ENCODE measurements at regions of chr7 and their contacts with region 1.

Region 1: GRCh38 chr7:27689591-27690164 is 27.0 kb upstream of the HIBADH start:
- DNase-seq: peak in 2 of 4 experiments; percentile 30
- ATAC-seq: peak; percentile 82
- H3K4me3 ChIP-seq: no peak overlapping the region
- H3K27ac ChIP-seq: no peak overlapping the region
- H3K4me1 ChIP-seq: no peaks in the 10 kb centered on the region; a peak in 1 of 5 replicates
- H3K27me3 ChIP-seq: no peaks in the 10 kb centered on the region
- CTCF ChIP-seq: peak; percentile 40 to 61 (median 44); a peak in 5 of 6 replicates
- EP300 ChIP-seq: no peak
- POLR2A ChIP-seq: no peak
- RAD21 ChIP-seq: peak; percentile 57 to 80

Region 2: DNA sequence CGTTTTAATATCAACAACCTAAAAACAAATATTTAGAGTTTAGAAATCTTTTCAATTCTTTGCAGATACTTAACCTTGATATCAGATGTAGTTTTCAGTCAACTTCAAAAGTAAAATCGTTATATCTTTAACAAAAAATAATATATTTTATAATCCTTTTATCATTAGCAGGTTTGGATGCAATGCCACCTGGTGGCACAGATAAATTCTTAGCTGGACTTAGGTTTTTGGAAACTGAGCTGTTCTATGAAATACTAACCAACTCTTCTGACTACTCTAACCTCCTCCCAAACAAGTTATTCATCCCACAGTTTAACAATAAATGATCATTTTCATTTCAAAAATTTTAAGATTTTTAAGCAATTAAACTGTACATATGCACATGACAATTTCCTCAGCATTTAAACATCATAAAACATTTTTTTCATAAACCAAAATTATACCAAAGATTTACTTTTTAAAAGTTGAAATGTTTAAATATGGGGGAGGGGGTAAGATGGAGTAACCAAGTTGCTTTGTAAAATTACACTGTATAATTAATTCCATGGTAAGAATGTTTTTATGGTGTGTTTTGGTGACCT is 83.9 kb before region 1 on chr7:
- CTCF ChIA-PET with region 1: no interaction called
- POLR2A ChIA-PET with region 1: no interaction called
- in situ Hi-C with region 1: no loop called
- intact Hi-C with region 1: no loop called
- DNase-seq: no peak
- ATAC-seq: no peak
- H3K4me3 ChIP-seq: no peak overlapping the region
- H3K27ac ChIP-seq: no peak overlapping the region
- H3K4me1 ChIP-seq: peaks cover 0 to 8% of the 10 kb centered on the region in 2 experiments; a peak in 3 of 5 replicates
- H3K27me3 ChIP-seq: no peaks in the 10 kb centered on the region
- CTCF ChIP-seq: peak in 2 of 3 experiments; percentile 16 to 45; a peak in 3 of 6 replicates
- EP300 ChIP-seq: no peak
- POLR2A ChIP-seq: no peak
- RAD21 ChIP-seq: no peak

Region 3: GRCh38 chr7:27739909-27740448 is 50.3 kb after region 1 on chr7 and contains the start of gene TAX1BP1:
- CTCF ChIA-PET with region 1: no interaction called
- POLR2A ChIA-PET with region 1: no interaction called
- in situ Hi-C with region 1: no loop called
- intact Hi-C with region 1: loop called (anchors 5 kb)
- DNase-seq: peak; percentile 95 to 97 (median 95)
- ATAC-seq: peak; percentile 89
- H3K4me3 ChIP-seq: peak within 1 kb of the TSS; percentile 91
- H3K27ac ChIP-seq: peak within 1 kb of the TSS; percentile 93
- H3K4me1 ChIP-seq: peaks cover 6 to 11% of the 10 kb centered on the region in 2 experiments
- H3K27me3 ChIP-seq: no peaks in the 10 kb centered on the region
- CTCF ChIP-seq: no peak
- EP300 ChIP-seq: no peak
- POLR2A ChIP-seq: peak; percentile 91
- RAD21 ChIP-seq: no peak
- polyA plus RNA-seq, gene TAX1BP1: 109 TPM

Region 4: GRCh38 chr7:27774717-27775328 is 85.1 kb after region 1 on chr7:
- CTCF ChIA-PET with region 1: no interaction called
- POLR2A ChIA-PET with region 1: interaction called, 4 read pairs
- in situ Hi-C with region 1: no loop called
- intact Hi-C with region 1: loop called (anchors 1 kb)
- DNase-seq: peak in 3 of 4 experiments; percentile 15 to 54 (median 18)
- ATAC-seq: peak; percentile 69
- H3K4me3 ChIP-seq: no peak overlapping the region
- H3K27ac ChIP-seq: no peak overlapping the region
- H3K4me1 ChIP-seq: peaks cover 0 to 5% of the 10 kb centered on the region in 2 experiments; a peak in 2 of 5 replicates
- H3K27me3 ChIP-seq: no peaks in the 10 kb centered on the region
- CTCF ChIP-seq: peak; percentile 42 to 84 (median 57); a peak in 5 of 6 replicates
- EP300 ChIP-seq: no peak
- POLR2A ChIP-seq: no peak
- RAD21 ChIP-seq: peak; percentile 79 to 80

Region 5: GRCh38 chr7:27793780-27794179 is 104.1 kb after region 1 on chr7:
- CTCF ChIA-PET with region 1: no interaction called
- POLR2A ChIA-PET with region 1: no interaction called
- in situ Hi-C with region 1: no loop called
- intact Hi-C with region 1: no loop called
- DNase-seq: no peak
- ATAC-seq: no peak
- H3K4me3 ChIP-seq: no peak overlapping the region
- H3K27ac ChIP-seq: no peak overlapping the region
- H3K4me1 ChIP-seq: no peaks in the 10 kb centered on the region
- H3K27me3 ChIP-seq: no peaks in the 10 kb centered on the region
- CTCF ChIP-seq: no peak
- EP300 ChIP-seq: no peak
- POLR2A ChIP-seq: no peak
- RAD21 ChIP-seq: no peak

Region 6: DNA sequence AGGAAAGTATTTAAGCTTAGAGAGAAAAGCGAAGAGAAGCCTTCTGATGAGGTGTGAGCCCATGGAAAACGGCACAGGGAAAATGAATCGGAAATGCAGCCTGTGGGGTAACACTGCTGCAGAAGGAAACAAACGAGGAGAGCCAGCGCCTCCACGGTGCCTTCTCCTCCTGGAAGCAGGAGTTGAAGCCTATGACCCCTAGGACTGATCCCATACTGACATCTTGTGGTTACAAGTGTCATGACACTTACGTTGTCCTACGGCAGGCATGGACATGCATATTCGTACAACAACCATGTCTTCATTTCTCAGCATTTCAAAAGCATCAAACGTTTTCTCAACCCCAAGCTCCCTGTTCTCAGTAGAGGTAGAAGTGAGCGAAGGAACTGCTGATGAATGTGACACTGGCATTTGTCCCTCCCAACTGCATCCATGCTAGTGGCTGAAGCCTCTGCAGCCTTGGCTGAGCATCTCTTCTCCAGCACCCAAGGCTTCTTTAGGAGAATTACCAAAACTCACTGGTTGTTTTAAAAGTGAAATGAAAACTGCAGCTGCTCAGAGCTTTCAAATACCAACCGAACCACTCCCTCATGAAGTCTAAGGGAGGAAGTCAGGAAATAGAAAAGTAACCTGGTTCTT is 330.7 kb after region 1 on chr7:
- CTCF ChIA-PET with region 1: no interaction called
- POLR2A ChIA-PET with region 1: no interaction called
- in situ Hi-C with region 1: no loop called
- intact Hi-C with region 1: loop called (anchors 2 kb)
- DNase-seq: peak; percentile 75 to 78 (median 77)
- ATAC-seq: peak; percentile 97
- H3K4me3 ChIP-seq: no peak overlapping the region
- H3K27ac ChIP-seq: no peak overlapping the region
- H3K4me1 ChIP-seq: no peaks in the 10 kb centered on the region
- H3K27me3 ChIP-seq: peaks cover 18 to 30% of the 10 kb centered on the region in 2 experiments; a peak in 4 of 5 replicates
- CTCF ChIP-seq: peak; percentile 81 to 95 (median 89)
- EP300 ChIP-seq: no peak
- POLR2A ChIP-seq: no peak
- RAD21 ChIP-seq: peak; percentile 81 to 90